Activated CD4-positive, alpha-beta T cell treated with anti-CD3 and anti-CD28 coated beads for 36 hours (primary cell): ENCODE measurements at regions of chr19 and their contacts with region 1.

Region 1: DNA sequence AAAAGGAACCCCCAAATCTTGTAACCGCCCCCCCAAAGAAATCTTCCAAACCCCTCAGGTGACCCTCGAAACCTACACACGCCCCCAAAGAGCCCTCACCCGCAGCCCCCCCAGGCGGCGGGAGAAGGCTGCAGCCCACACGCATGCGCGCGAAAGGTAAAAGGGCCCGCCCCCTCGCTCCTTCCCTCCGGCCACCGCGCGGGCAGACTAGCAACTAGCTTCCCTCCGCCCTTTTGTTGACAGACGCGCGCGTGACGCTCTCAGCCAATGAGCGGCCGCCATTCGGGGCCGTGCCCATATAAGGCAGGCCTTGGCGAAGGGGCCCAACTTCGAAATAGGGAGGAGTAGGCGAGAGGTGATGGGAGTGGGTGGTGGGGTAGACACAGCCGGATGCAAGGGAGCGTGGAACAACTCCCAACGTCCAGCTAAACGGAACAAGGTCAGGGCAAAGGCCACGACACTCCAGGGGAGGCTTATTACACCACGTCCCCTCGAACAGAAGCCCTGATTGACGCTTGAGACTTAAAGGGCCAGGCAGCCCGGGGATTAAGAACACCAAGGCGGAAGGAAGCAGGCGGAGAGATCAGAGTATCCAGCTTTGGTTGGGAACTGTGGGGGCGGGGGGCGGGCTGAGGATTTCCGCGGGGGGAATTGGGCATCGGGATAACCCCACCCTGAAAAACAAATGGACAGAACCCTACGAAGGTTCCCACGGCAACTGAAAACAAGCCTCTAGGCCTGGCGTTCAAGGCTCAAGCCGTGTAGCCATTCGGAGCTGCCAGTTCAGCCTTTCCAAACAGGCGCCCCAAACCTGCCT is 13.3 kb downstream of the FBXO46 start:
- DNase-seq: peak; percentile 99
- ATAC-seq: peak; percentile 97
- H3K4me3 Mint-ChIP-seq: peak overlapping the region; percentile 93
- H3K27ac Mint-ChIP-seq: peak overlapping the region; percentile 94
- H3K4me1 Mint-ChIP-seq: peaks cover 40% of the 10 kb centered on the region
- H3K27me3 Mint-ChIP-seq: no peaks in the 10 kb centered on the region

Region 2: DNA sequence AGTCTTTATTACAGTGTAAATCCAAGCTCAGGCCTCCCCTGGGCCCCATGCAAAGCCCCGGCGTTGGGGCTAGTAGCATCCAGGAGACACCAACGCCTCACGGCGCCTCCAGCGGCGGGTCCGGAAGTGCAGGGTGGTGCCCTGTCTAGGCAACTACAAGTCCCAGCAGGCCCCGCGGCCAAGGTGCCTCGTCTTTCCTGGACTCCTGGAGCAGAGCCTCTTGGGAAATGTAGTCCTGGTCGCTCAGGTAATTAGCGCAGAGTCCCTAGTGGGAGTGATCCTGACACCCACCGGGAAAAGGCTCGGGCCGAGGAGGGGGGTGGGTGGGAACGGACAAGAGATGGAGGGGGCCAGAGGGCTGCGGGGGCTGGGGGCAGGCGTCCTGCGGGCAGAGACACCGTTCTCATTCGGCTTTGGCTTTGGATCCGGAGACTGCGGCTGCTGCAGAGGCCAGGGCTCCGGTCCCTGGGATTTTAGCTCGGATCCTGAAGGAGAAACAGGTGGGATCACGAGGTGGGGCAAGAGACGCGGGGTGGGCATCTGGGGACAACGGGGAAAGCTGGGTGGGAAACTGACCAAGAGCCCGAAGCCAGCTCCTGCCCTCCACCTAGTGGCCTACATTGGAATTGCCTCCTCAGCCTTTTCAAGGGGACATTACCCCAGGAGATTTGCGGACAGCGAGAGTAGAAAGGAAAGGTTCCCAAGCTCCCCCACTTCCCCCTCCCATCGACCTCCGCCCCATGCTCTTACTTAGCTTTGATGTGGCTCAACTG is 231.9 kb before region 1 on chr19:
- CTCF ChIA-PET with region 1: interaction called, 4 read pairs
- POLR2A ChIA-PET with region 1: no interaction called
- intact Hi-C with region 1: loop called in 1 of 2 experiments (anchors 1 kb)
- DNase-seq: peak; percentile 100
- ATAC-seq: peak; percentile 99
- H3K4me3 Mint-ChIP-seq: peak overlapping the region; percentile 83
- H3K27ac Mint-ChIP-seq: peak overlapping the region; percentile 91
- H3K4me1 Mint-ChIP-seq: peaks cover 13% of the 10 kb centered on the region
- H3K27me3 Mint-ChIP-seq: peaks cover 2% of the 10 kb centered on the region

Region 3: DNA sequence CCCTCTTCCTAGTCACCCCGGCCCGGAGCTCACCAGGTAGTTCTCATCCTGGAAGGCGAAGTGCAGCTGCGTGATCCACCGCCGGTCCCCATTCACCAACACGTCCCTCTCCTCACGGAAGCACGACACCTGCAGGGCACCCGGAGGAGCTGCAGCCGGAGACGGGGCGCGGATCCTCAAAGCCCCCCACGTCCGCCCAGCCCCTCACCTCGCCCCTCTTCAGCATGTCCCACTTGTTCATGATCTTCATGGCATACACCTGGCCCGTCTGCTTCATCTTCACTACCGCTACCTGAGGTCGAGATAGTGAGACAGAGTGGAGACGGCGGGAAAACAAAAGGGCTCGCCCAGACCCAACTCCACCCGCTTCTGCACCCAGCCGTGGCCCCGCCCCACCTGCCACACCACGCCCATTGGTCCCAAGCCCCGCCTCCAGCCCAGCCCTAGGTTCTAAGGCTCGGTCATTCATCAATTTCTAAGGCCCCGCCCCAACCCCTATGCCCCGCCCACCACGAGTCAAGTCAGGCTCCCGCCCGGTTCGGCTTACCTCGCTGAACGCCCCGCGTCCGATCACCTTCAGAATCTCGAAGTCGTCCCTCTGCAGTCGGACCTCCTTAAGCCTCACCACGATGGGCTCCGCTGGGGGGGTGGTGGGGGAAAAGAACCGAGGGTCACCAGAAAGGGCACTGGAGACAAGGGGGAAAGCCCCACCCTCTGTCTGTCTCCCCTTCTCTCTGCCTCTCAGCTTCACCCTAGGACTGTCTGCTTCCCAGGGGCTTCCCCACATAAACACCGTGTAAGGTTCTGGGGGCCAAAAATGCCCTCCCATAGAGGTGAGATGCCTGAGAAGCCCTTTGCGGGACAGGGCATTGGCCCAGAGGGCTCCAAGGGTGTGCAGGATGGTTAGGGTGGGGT is 62.1 kb after region 1 on chr19:
- CTCF ChIA-PET with region 1: interaction called, 4 read pairs
- POLR2A ChIA-PET with region 1: no interaction called
- intact Hi-C with region 1: loop called in 1 of 2 experiments (anchors 1 kb)
- DNase-seq: peak; percentile 97
- ATAC-seq: peak; percentile 99
- H3K4me3 Mint-ChIP-seq: peak overlapping the region; percentile 47
- H3K27ac Mint-ChIP-seq: no peak overlapping the region
- H3K4me1 Mint-ChIP-seq: peaks cover 16% of the 10 kb centered on the region
- H3K27me3 Mint-ChIP-seq: peaks cover 9% of the 10 kb centered on the region